Left ventricle myocardium inferior (tissue), 1 donor: ENCODE measurements at regions of chr5 and their contacts with region 1.

Region 1: GRCh38 chr5:149141224-149141956 is at the start of gene ABLIM3:
- DNase-seq: peak; percentile 75
- H3K4me3 ChIP-seq: peak within 1 kb of the TSS; percentile 94
- H3K27ac ChIP-seq: peak within 1 kb of the TSS; percentile 96
- H3K4me1 ChIP-seq: peaks cover 65% of the 10 kb centered on the region
- H3K27me3 ChIP-seq: no peaks in the 10 kb centered on the region
- CTCF ChIP-seq: peak; percentile 96
- total RNA-seq, gene ABLIM3: 122 TPM

Region 2: GRCh38 chr5:148887123-148887881 is 254.1 kb before region 1 on chr5:
- intact Hi-C with region 1: no loop called
- DNase-seq: no peak
- H3K4me3 ChIP-seq: no peak overlapping the region
- H3K27ac ChIP-seq: no peak overlapping the region
- H3K4me1 ChIP-seq: no peaks in the 10 kb centered on the region
- H3K27me3 ChIP-seq: no peaks in the 10 kb centered on the region
- CTCF ChIP-seq: no peak

Region 3: GRCh38 chr5:149228618-149229297 is 87.4 kb after region 1 on chr5:
- intact Hi-C with region 1: loop called (anchors 5 kb)
- DNase-seq: no peak
- H3K4me3 ChIP-seq: no peak overlapping the region
- H3K27ac ChIP-seq: peak overlapping the region; percentile 76
- H3K4me1 ChIP-seq: peaks cover 48% of the 10 kb centered on the region
- H3K27me3 ChIP-seq: no peaks in the 10 kb centered on the region
- CTCF ChIP-seq: peak; percentile 88

Region 4: DNA sequence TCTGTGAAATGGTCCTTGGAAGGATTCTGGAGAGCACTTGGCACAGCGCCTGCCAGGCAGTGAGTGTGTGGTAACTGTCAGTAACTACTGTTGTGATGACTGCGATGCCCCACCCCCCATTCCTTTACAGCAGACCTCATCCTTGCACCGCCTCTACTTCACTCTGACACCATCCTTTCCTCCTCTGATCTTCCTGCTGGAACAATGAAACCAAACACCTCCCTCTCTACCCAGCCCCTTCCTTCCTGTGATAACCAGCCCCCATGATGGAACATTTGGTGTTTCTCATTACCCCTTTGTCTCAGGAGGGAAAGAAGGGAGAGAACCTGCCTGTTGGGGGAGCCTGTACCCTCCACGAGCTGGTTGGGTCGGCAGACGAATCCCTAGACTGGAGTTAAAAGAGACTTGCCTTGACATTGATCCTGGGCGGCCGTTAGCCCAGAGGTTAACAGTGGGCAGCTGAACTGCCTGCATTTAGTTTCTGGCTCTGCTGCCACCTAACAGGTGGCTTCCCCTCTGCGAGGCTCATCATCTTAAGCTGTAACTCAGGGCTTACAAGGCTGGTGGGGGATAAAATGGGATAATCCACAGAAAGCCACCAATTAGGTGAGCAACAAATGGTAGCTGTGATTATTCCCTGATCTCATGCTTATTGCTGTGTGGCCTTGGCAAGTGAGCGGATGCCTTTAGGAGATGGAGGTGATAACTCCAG is 169.7 kb after region 1 on chr5:
- intact Hi-C with region 1: no loop called
- DNase-seq: no peak
- H3K4me3 ChIP-seq: no peak overlapping the region
- H3K27ac ChIP-seq: peak overlapping the region; percentile 32
- H3K4me1 ChIP-seq: peaks cover 31% of the 10 kb centered on the region
- H3K27me3 ChIP-seq: no peaks in the 10 kb centered on the region
- CTCF ChIP-seq: no peak